ENCODE measurements at regions of chr14 and their contacts with region 1.

Region 1: GRCh38 chr14:58072288-58073071 is 79.5 kb downstream of the ARMH4 start:
- DNase-seq: peak in 34 of 42 donors; percentile 14 to 78 (median 54)

Region 2: GRCh38 chr14:57486767-57487379 is 585.6 kb before region 1 on chr14:
- intact Hi-C with region 1: loop called (anchors 10 kb)
- DNase-seq: peak in 16 of 42 donors; percentile 4 to 63 (median 26)

Region 3: DNA sequence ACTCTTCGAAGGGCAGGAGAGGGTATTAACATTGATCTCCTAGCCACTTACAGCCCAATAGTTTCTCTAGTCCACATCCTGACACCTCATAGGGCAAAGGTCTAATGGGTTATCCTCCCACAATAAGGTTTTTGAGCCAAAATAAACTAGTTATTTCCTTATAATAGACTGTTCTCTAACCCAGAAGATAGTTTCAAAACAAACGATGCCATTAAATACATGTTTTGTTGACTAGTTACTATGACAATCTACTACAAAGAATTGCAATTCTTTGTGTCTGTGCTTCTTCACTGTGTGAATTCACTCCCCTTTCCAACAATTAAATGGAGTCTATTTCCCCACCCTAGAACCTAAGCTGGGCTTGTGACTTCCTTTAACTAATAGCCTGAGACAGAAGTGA is 121.1 kb after region 1 on chr14:
- intact Hi-C with region 1: no loop called
- DNase-seq: no peak

Region 4: DNA sequence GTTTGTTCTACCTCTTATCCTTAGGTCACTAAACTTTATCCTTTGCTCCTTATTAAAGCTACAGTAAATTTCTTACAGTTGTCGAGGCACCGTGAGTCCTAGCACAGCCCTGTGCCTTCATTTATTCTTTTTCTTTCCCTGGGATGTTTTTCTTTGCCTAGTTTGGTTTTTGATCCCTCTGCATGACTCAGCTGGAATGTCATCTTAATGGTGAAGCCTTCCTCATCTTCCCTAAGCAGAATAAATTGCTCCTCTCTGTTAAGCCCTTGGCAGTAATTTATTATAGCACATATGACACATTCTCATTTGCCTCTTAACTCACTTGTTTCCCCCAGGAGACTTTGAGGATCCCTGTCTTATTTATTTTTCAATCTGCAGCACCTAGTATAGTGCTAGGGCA is 144.1 kb after region 1 on chr14:
- intact Hi-C with region 1: no loop called
- DNase-seq: no peak